Naive thymus-derived CD4-positive, alpha-beta T cell (primary cell): ENCODE measurements at regions of chr20 and their contacts with region 1.

Region 1: GRCh38 chr20:56468316-56469082 is at the start of gene RTF2:
- DNase-seq: peak; percentile 93 to 99 (median 96)
- ATAC-seq: peak; percentile 99
- H3K4me3 ChIP-seq: peak within 1 kb of the TSS; percentile 74
- H3K4me3 Mint-ChIP-seq: peak within 1 kb of the TSS; percentile 94 to 100 (median 100)
- H3K27ac ChIP-seq: peak within 1 kb of the TSS; percentile 88
- H3K27ac Mint-ChIP-seq: peak within 1 kb of the TSS; percentile 95 to 100 (median 99)
- H3K4me1 ChIP-seq: peaks cover 27 to 31% of the 10 kb centered on the region in 2 donors
- H3K4me1 Mint-ChIP-seq: peaks cover 27 to 53% (median 48%) of the 10 kb centered on the region in 7 donors
- H3K27me3 ChIP-seq: no peaks in the 10 kb centered on the region
- H3K27me3 Mint-ChIP-seq: no peaks in the 10 kb centered on the region
- total RNA-seq, gene RTF2: 62.5 to 118 (median 72.0) TPM

Region 2: DNA sequence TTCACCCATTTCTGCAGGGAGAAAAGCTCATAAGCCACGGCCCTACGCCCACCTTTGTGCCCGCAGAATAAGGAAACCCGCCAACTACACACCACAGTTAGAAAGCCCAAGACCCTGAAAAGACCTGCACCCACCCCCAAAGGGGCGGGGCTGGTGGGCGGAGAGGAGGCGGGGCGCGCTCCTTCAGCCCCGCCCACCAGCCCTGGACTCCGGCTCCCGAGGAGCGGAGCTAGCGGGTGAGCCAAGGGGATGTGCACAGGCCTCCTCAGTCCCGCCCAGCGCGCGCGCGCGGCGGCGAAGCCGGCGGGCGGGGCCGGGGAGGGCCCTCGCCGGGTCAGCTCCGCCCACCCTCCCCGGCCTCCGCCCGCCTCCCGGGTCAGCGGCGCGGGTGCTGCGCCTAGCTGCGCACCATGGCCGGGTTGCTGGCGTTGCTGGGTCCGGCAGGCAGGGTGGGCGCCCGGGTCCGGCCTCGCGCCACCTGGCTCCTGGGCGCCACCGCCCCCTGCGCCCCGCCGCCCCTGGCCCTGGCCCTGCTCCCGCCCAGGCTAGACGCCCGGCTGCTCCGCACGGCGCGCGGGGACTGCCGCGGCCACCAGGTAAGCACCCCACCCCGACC is 109.8 kb before region 1 on chr20 and contains the start of gene FAM210B:
- CTCF ChIA-PET with region 1: no interaction called
- POLR2A ChIA-PET with region 1: interaction called, 8 read pairs
- intact Hi-C with region 1: loop called in 1 of 2 experiments (anchors 1 kb)
- DNase-seq: peak; percentile 63 to 82 (median 79)
- ATAC-seq: peak; percentile 99
- H3K4me3 ChIP-seq: peak within 1 kb of the TSS; percentile 72
- H3K4me3 Mint-ChIP-seq: peak within 1 kb of the TSS; percentile 88 to 96 (median 92)
- H3K27ac ChIP-seq: peak within 1 kb of the TSS; percentile 71
- H3K27ac Mint-ChIP-seq: peak within 1 kb of the TSS; percentile 54 to 91 (median 81)
- H3K4me1 ChIP-seq: peaks cover 0 to 14% of the 10 kb centered on the region in 2 donors
- H3K4me1 Mint-ChIP-seq: peaks cover 13 to 29% (median 22%) of the 10 kb centered on the region in 7 donors
- H3K27me3 ChIP-seq: no peaks in the 10 kb centered on the region
- H3K27me3 Mint-ChIP-seq: peaks cover 0 to 4% (median 0%) of the 10 kb centered on the region in 5 donors
- total RNA-seq, gene FAM210B: 8.1 to 31.8 (median 19.4) TPM

Region 3: DNA sequence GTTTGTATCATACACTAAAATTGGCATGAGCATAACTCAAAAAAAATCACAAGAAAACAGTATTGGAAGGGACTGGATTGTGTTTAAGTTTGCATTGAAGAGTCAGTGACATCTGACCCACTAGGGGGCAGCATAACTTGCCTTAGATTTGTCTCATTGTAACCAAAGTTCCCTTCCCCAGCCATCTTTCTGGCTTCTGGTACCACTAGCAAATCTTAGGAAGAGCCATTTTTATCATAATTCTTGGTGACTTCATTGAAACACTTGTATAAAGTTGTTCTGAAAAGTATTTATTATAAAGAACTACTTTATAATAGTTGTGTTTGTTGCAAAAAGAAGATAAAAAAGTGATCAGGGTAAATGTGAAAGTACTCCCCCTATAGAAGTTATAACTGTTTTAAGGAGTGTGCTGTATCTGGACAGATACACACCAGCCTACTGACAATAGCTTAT is 68.4 kb before region 1 on chr20:
- CTCF ChIA-PET with region 1: no interaction called
- POLR2A ChIA-PET with region 1: interaction called, 5 read pairs
- intact Hi-C with region 1: loop called (anchors 1 kb)
- DNase-seq: peak in 8 of 9 donors; percentile 43 to 78 (median 72)
- ATAC-seq: peak; percentile 91
- H3K4me3 ChIP-seq: no peak overlapping the region
- H3K4me3 Mint-ChIP-seq: peak overlapping the region in 3 of 10 donors; percentile 28 to 35 (median 32)
- H3K27ac ChIP-seq: peak overlapping the region; percentile 31
- H3K27ac Mint-ChIP-seq: peak overlapping the region in 8 of 9 donors; percentile 32 to 78 (median 66)
- H3K4me1 ChIP-seq: peaks cover 5 to 6% of the 10 kb centered on the region in 2 donors
- H3K4me1 Mint-ChIP-seq: peaks cover 10 to 42% (median 27%) of the 10 kb centered on the region in 7 donors
- H3K27me3 ChIP-seq: no peaks in the 10 kb centered on the region
- H3K27me3 Mint-ChIP-seq: no peaks in the 10 kb centered on the region

Region 4: DNA sequence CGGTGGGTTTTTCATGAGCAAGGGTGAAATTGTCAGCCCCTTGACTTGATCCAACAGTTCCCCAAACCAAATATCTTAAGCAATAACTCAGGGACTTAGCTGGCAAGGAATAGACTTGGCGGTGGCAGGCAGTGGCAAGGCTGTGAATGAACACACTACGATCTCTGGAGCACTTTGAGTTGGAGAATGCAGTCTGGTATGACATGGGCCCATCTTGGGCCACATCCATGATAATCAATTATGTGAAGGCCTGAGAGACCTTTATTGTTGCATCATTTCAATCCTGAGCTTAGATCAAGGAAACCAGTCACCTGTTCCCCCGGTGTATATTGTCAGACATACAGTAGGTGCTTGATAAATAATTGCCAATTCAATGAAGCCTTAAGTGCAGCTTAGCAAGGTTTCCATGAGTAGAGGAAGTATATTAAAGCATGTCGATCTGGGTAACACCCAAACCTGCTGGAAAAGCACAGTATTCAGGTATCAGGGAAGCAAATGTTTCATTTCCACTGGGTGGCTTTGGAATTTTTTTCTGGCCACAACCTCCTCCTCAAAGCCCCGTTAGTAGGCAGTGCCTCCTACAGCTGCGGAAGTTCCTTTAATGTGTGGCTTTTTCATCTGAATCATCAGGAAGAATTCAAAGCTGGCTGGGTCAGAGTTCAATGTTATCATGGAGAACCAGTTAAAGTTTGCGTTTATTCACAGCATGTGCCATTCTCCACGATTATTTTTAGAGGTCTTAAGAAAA is 46.2 kb before region 1 on chr20:
- CTCF ChIA-PET with region 1: no interaction called
- POLR2A ChIA-PET with region 1: interaction called, 11 read pairs
- intact Hi-C with region 1: no loop called
- DNase-seq: no peak
- ATAC-seq: no peak
- H3K4me3 ChIP-seq: no peak overlapping the region
- H3K4me3 Mint-ChIP-seq: peak overlapping the region; percentile 11 to 78 (median 58)
- H3K27ac ChIP-seq: peak overlapping the region; percentile 36
- H3K27ac Mint-ChIP-seq: peak overlapping the region; percentile 50 to 98 (median 92)
- H3K4me1 ChIP-seq: peaks cover 33 to 58% of the 10 kb centered on the region in 2 donors
- H3K4me1 Mint-ChIP-seq: peaks cover 41 to 84% (median 64%) of the 10 kb centered on the region in 7 donors
- H3K27me3 ChIP-seq: no peaks in the 10 kb centered on the region
- H3K27me3 Mint-ChIP-seq: no peaks in the 10 kb centered on the region

Region 5: GRCh38 chr20:56483944-56484343 is 15.4 kb after region 1 on chr20:
- CTCF ChIA-PET with region 1: no interaction called
- POLR2A ChIA-PET with region 1: no interaction called
- intact Hi-C with region 1: loop called in 1 of 2 experiments (anchors 2 kb)
- DNase-seq: peak in 7 of 9 donors; percentile 14 to 57 (median 43)
- ATAC-seq: peak; percentile 61
- H3K4me3 ChIP-seq: peak overlapping the region; percentile 33
- H3K4me3 Mint-ChIP-seq: peak overlapping the region; percentile 64 to 93 (median 83)
- H3K27ac ChIP-seq: peak overlapping the region; percentile 69
- H3K27ac Mint-ChIP-seq: peak overlapping the region; percentile 76 to 95 (median 92)
- H3K4me1 ChIP-seq: peaks cover 0 to 18% of the 10 kb centered on the region in 2 donors
- H3K4me1 Mint-ChIP-seq: peaks cover 25 to 74% (median 54%) of the 10 kb centered on the region in 7 donors
- H3K27me3 ChIP-seq: no peaks in the 10 kb centered on the region
- H3K27me3 Mint-ChIP-seq: no peaks in the 10 kb centered on the region

Region 6: GRCh38 chr20:57351042-57351783 is 882.7 kb after region 1 on chr20 and contains the start of gene RAE1:
- CTCF ChIA-PET with region 1: no interaction called
- POLR2A ChIA-PET with region 1: no interaction called
- intact Hi-C with region 1: loop called in 1 of 2 experiments (anchors 1 kb)
- DNase-seq: peak; percentile 81 to 92 (median 89)
- ATAC-seq: peak; percentile 88
- H3K4me3 ChIP-seq: peak within 1 kb of the TSS; percentile 81
- H3K4me3 Mint-ChIP-seq: peak within 1 kb of the TSS; percentile 89 to 97 (median 92)
- H3K27ac ChIP-seq: peak within 1 kb of the TSS; percentile 90
- H3K27ac Mint-ChIP-seq: peak within 1 kb of the TSS; percentile 81 to 93 (median 90)
- H3K4me1 ChIP-seq: peaks cover 0 to 19% of the 10 kb centered on the region in 2 donors
- H3K4me1 Mint-ChIP-seq: peaks cover 14 to 46% (median 29%) of the 10 kb centered on the region in 7 donors
- H3K27me3 ChIP-seq: no peaks in the 10 kb centered on the region
- H3K27me3 Mint-ChIP-seq: peaks cover 0 to 14% (median 0%) of the 10 kb centered on the region in 5 donors
- total RNA-seq, gene RAE1: 31.0 to 41.3 (median 35.2) TPM